ENCODE measurements at regions of chr13 and their contacts with region 1.

Region 1: DNA sequence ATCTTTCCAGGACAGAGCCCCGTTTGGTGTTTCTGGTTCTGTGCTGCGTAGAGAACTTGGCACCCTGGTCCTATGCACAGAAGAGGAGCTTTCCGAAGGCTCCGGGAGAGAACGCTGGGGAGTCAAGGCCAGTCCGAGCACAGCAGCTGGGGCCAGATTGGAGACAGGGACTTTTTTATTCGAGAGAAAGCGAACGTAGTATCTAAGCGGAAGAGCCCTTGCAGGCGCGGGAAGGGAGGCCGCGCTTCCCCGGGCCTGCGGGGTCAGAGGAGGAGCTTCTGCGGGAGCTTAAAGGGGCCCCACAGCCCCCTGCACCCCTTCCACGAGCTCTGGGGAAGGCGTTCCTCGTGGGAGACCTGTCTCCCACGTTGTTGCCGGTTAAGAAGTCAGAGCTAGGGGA is 48.6 kb upstream of the ARHGEF7 start:
- DNase-seq: no peak
- ATAC-seq: peak; percentile 25 to 61

Region 2: GRCh38 chr13:111460548-111461444 is 394.3 kb after region 1 on chr13:
- intact Hi-C with region 1: loop called in 1 of 2 experiments (anchors 10 kb)
- DNase-seq: no peak
- ATAC-seq: peak; percentile 59 to 72